ENCODE measurements at regions of chr16 and their contacts with region 1.

Region 1: DNA sequence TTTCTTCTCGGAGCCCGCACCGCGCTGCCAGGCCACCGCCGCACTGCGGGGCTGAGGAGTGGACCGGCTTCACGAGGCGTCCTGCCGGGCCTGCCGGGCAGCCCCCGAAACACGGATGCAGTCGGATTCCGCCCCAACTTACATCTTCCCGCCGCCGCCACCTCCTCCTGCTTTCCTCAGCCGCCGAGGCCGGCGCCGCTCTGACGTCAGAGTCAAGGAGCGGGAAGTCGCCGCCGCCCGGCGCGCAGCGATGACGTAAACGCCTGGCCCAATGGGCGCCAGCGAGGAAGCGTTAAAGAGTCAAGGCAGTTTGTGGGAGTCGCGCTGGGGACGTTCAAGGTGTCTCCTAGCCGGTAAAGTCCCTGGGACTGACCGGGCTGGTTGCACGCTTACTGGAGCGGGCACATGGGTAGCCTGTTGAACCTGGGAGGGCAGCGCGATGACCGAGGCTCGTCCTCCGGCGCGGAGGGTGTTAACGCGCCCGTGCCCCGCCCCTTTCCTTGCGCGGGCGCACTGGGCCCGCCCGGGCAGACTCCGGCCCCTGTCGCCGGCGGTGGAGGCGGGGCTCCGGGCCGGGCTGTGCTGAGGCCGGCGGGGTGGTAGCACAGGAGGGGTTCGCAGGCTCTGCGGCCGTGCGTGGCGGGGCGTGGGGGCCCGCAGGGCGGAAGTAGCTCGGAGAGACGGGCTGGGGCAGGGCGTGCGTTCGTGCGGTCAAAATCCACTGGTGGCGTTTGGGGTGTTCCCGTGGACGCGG is at the start of gene RNPS1:
- DNase-seq: peak; percentile 85
- H3K4me3 ChIP-seq: peak within 1 kb of the TSS; percentile 91
- H3K27ac ChIP-seq: peak within 1 kb of the TSS; percentile 95
- H3K27me3 ChIP-seq: no peaks in the 10 kb centered on the region
- CTCF ChIP-seq: no peak
- polyA plus RNA-seq, gene RNPS1: 95.3 and 99.9 TPM in 2 replicates

Region 2: DNA sequence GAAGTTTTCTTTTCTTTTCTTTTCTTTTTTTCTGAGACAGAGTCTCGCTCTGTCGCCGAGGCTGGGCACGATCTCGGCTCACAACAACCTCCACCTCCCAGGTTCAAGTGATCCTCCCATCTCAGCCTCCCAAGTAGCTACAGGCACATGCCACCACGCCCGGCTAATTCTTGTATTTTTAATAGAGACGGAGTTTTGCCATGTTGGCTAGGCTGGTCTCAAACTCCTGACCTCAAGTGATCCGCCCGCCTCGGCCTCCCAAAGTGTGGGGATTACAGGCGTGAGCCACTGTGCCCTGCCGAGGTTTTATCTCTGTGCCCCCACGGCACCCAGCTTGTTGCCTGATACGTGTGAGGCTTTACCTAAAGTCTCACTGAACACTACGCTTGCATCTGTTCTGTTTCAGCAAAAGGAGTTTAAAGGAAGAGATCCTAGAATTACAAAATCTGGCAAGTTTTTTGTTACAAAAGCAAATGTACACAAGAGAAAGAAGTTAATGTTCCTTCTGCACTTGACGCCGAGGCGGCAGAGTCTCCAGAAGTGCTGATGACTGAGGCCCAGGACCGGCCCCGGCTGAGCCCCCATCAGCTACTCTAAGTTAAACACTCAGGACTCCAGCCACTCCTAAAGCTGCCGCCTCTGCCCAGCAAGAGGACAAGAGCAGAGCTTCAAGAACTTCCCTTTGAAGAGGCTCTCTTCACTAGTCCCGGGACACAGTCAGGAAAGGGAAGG is 63.3 kb after region 1 on chr16:
- CTCF ChIA-PET with region 1: interaction called, 10 read pairs
- POLR2A ChIA-PET with region 1: no interaction called
- DNase-seq: no peak
- H3K4me3 ChIP-seq: no peak overlapping the region
- H3K27ac ChIP-seq: no peak overlapping the region
- H3K27me3 ChIP-seq: peaks cover 30% of the 10 kb centered on the region
- CTCF ChIP-seq: no peak